B cell (primary cell): ENCODE measurements at regions of chr6 and their contacts with region 1.

Region 1: GRCh38 chr6:129683601-129684322 is 26.2 kb downstream of the ARHGAP18 start:
- DNase-seq: peak; percentile 73
- ATAC-seq: peak; percentile 98
- H3K4me3 ChIP-seq: no peak overlapping the region
- H3K4me3 Mint-ChIP-seq: peak overlapping the region; percentile 29
- H3K27ac ChIP-seq: peak overlapping the region; percentile 21 to 37
- H3K27ac Mint-ChIP-seq: peak overlapping the region; percentile 51
- H3K4me1 ChIP-seq: peaks cover 40 to 46% of the 10 kb centered on the region in 2 donors
- H3K4me1 Mint-ChIP-seq: peaks cover 47% of the 10 kb centered on the region
- H3K27me3 ChIP-seq: no peaks in the 10 kb centered on the region
- H3K27me3 Mint-ChIP-seq: no peaks in the 10 kb centered on the region
- CTCF ChIP-seq: no peak

Region 2: GRCh38 chr6:129236001-129236517 is 447.7 kb before region 1 on chr6:
- CTCF ChIA-PET with region 1: no interaction called
- POLR2A ChIA-PET with region 1: no interaction called
- intact Hi-C with region 1: no loop called
- DNase-seq: no peak
- ATAC-seq: no peak
- H3K4me3 ChIP-seq: peak overlapping the region in 1 of 5 experiments; percentile 5
- H3K4me3 Mint-ChIP-seq: peak overlapping the region; percentile 32
- H3K27ac ChIP-seq: peak overlapping the region in 1 of 2 donors; percentile 34
- H3K27ac Mint-ChIP-seq: peak overlapping the region; percentile 73
- H3K4me1 ChIP-seq: peaks cover 15 to 18% of the 10 kb centered on the region in 2 donors
- H3K4me1 Mint-ChIP-seq: peaks cover 29% of the 10 kb centered on the region
- H3K27me3 ChIP-seq: no peaks in the 10 kb centered on the region
- H3K27me3 Mint-ChIP-seq: no peaks in the 10 kb centered on the region
- CTCF ChIP-seq: no peak

Region 3: GRCh38 chr6:129764761-129765407 is 81.1 kb after region 1 on chr6:
- CTCF ChIA-PET with region 1: no interaction called
- POLR2A ChIA-PET with region 1: interaction called, 10 read pairs
- intact Hi-C with region 1: no loop called
- DNase-seq: no peak
- ATAC-seq: no peak
- H3K4me3 ChIP-seq: no peak overlapping the region
- H3K4me3 Mint-ChIP-seq: no peak overlapping the region
- H3K27ac ChIP-seq: no peak overlapping the region
- H3K27ac Mint-ChIP-seq: no peak overlapping the region
- H3K4me1 ChIP-seq: peaks cover 10 to 11% of the 10 kb centered on the region in 2 donors
- H3K4me1 Mint-ChIP-seq: peaks cover 11% of the 10 kb centered on the region
- H3K27me3 ChIP-seq: peaks cover 0 to 37% (median 32%) of the 10 kb centered on the region in 4 experiments
- H3K27me3 Mint-ChIP-seq: peaks cover 54% of the 10 kb centered on the region
- CTCF ChIP-seq: no peak